WTC11 (cell line): ENCODE measurements at regions of chr1 and their contacts with region 1.

Region 1: GRCh38 chr1:36385410-36386257 is at the start of gene STK40:
- DNase-seq: peak; percentile 97
- ATAC-seq: peak; percentile 96
- H3K4me3 Mint-ChIP-seq: peak within 1 kb of the TSS; percentile 94
- H3K27ac Mint-ChIP-seq: peak within 1 kb of the TSS; percentile 99
- H3K4me1 Mint-ChIP-seq: peaks cover 31% of the 10 kb centered on the region
- H3K27me3 Mint-ChIP-seq: no peaks in the 10 kb centered on the region
- CTCF ChIP-seq: no peak
- total RNA-seq, gene STK40: 17.8 to 24.7 TPM (median 20.4 TPM) in 3 replicates

Region 2: DNA sequence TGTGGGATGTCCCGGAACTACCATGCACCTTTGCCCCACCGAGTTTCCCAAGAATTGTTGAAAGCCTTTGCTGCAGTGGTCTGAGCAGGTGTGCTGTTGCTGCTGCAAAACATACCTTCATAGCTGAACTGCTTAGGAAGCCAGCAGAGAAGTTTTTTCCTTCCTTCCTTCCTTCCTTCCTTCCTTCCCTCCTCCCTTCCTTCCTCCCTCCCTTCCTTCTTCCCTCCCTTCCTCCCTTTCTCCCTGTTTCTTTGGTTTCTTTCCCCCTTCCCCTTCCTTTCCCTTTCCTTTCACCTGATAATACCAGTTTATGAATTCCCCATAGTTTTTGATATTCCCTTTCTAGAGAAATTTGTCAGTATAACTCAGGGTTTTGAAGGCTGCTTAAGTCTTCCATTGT is 90.2 kb before region 1 on chr1:
- CTCF ChIA-PET with region 1: no interaction called
- POLR2A ChIA-PET with region 1: no interaction called
- DNase-seq: no peak
- ATAC-seq: no peak
- H3K4me3 Mint-ChIP-seq: no peak overlapping the region
- H3K27ac Mint-ChIP-seq: no peak overlapping the region
- H3K4me1 Mint-ChIP-seq: no peaks in the 10 kb centered on the region; the same call in 1 of the 2 replicates
- H3K27me3 Mint-ChIP-seq: no peaks in the 10 kb centered on the region
- CTCF ChIP-seq: no peak

Region 3: DNA sequence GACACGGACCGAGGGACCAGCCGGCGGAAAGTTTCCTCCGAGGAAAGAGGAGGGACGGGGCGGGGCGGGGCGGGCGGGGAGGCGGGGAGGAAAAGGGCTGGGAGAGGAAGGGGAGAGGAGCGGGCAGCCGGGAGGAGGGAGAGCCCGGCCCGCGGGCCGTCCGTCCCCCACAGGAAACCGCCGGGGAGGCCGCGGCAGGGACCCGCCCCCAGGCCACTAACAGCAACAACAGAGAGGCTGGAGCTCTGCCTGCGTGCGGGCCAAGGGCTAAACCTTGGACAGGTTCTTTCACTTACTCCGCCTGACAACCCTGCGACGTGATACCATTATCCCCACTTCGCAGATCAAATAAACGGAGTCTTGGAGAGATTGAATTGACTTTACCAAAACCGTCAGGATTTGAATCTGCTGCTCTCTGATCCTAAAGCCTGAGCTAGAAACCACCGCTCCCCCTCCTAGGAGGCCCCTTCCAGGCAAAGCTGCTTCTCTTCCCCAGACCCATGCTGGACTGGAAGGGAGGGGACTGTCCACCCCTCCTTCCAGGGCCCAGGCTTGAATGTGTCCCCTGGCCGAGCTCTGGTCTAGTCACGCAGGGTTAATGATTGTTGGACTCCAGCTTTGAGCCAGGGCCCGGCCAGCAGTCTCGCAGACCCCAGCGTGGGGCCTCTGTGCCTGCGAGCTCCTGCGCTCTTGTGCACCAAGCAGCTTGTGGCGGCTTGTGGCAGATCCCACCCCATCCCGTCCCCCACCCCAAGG is 61.9 kb before region 1 on chr1 and contains the start of gene EVA1B:
- CTCF ChIA-PET with region 1: interaction called, 4 read pairs
- POLR2A ChIA-PET with region 1: interaction called, 23 read pairs
- DNase-seq: peak; percentile 74
- ATAC-seq: peak; percentile 15
- H3K4me3 Mint-ChIP-seq: peak within 1 kb of the TSS; percentile 76
- H3K27ac Mint-ChIP-seq: peak within 1 kb of the TSS; percentile 65
- H3K4me1 Mint-ChIP-seq: peaks cover 25% of the 10 kb centered on the region
- H3K27me3 Mint-ChIP-seq: peaks cover 10% of the 10 kb centered on the region
- CTCF ChIP-seq: no peak
- total RNA-seq, gene EVA1B: 32.0 to 45.2 TPM (median 41.5 TPM) in 3 replicates

Region 4: DNA sequence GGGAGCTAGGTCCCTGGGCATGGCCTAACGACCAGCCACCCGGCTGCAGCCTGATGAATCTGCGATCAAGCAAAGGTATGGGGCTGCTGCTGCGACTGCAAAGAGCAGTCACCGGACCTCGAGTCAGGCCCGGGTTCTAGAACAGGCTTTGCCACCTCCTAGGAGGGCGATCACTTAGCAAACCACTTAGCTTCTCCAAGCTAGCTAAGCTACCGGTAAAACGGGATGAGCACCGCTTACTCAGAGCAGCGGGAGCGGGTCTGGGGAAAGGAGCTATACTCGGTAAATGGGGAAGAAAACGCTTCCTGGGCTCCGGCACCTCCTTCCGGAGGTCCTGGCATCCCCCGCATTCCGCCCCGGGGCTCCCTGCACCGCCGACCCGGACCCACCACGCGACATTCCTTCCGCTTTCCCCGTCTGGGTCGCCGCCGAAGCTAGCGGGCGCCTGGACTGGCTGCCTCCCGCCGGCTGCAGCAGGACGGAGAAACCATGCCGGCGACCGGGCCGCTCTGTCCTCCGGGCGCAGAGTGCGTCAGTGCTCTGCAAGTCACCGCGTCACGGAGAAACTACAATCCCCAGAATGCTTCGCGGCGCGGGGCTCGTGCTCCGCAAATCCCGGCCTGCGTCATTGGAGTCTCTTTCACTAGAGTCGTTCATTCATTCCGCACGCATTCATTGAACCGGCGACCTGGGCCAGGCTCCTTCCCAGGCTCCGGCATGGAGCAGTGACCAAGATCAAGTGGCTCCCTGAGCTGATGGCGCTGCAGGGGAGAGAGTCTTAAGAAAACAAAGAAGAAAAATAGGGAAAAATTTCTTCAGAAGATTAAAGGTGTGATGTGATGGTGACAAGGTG is 12.0 kb after region 1 on chr1 and contains the start of gene LSM10:
- CTCF ChIA-PET with region 1: interaction called, 23 read pairs
- POLR2A ChIA-PET with region 1: interaction called, 172 read pairs
- DNase-seq: peak; percentile 96
- ATAC-seq: peak; percentile 51
- H3K4me3 Mint-ChIP-seq: peak within 1 kb of the TSS; percentile 89
- H3K27ac Mint-ChIP-seq: peak within 1 kb of the TSS; percentile 98
- H3K4me1 Mint-ChIP-seq: peaks cover 24% of the 10 kb centered on the region
- H3K27me3 Mint-ChIP-seq: no peaks in the 10 kb centered on the region; the same call in 1 of the 2 replicates
- CTCF ChIP-seq: no peak
- total RNA-seq, gene LSM10: 49.1 to 56.3 TPM (median 49.3 TPM) in 3 replicates